ENCODE measurements at regions of chr6 and their contacts with region 1.

Region 1: GRCh38 chr6:34986845-34987246 is 97.8 kb downstream of the ANKS1A start:
- DNase-seq: peak; percentile 68
- H3K4me3 Mint-ChIP-seq: no peak overlapping the region
- H3K27ac Mint-ChIP-seq: no peak overlapping the region
- H3K4me1 Mint-ChIP-seq: no peaks in the 10 kb centered on the region
- H3K27me3 Mint-ChIP-seq: no peaks in the 10 kb centered on the region

Region 2: GRCh38 chr6:34773916-34774315 is 212.9 kb before region 1 on chr6:
- CTCF ChIA-PET with region 1: no interaction called
- POLR2A ChIA-PET with region 1: no interaction called
- intact Hi-C with region 1: no loop called
- DNase-seq: no peak
- H3K4me3 Mint-ChIP-seq: no peak overlapping the region
- H3K27ac Mint-ChIP-seq: no peak overlapping the region
- H3K4me1 Mint-ChIP-seq: peaks cover 14% of the 10 kb centered on the region
- H3K27me3 Mint-ChIP-seq: no peaks in the 10 kb centered on the region

Region 3: DNA sequence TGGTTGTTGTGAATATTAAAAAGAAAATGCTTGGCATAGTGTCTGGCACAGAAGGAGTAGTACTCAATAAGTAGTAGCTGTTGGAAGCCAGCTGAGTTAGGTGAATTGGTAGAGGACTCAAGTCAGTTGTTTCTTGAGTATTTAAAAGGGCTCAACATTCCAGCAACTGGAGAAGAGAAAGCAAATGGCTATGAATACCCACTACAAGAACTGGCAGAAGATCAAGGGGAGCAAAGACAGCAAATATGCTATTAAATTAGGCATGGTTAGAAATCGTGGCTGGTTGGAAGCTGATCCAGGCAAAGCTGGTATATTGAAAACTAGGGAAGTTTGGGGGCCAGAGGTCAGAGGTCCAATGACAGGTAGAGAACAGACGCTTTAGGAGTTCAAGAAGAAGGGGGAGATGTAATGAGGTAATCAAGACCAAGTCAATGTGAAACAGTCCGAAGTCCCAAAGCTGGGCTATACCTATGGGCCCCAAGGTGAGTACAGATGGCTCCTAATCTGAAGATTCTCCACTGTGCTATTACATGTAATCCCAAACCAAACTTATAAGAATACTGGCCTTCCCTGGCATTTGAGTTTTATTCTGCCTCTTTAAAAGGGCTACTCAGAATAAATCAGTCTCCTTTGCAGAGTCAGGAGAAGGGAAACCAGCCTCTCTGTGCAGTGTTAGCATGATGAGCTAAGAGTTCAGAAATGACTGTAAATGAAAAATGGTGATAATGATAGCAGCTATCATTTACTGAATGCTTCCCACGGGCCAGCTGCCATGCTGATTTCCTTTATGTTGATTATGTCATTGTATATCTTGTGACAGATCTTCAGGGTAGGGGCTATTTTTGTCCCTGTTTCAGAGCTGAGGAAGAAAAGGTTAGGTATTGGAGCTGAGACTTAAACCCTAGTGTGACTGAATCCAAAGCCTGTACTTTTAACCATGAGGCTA is 24.5 kb after region 1 on chr6:
- CTCF ChIA-PET with region 1: interaction called, 14 read pairs
- POLR2A ChIA-PET with region 1: no interaction called
- intact Hi-C with region 1: no loop called
- DNase-seq: peak; percentile 40
- H3K4me3 Mint-ChIP-seq: no peak overlapping the region
- H3K27ac Mint-ChIP-seq: no peak overlapping the region
- H3K4me1 Mint-ChIP-seq: peaks cover 10% of the 10 kb centered on the region
- H3K27me3 Mint-ChIP-seq: no peaks in the 10 kb centered on the region

Region 4: DNA sequence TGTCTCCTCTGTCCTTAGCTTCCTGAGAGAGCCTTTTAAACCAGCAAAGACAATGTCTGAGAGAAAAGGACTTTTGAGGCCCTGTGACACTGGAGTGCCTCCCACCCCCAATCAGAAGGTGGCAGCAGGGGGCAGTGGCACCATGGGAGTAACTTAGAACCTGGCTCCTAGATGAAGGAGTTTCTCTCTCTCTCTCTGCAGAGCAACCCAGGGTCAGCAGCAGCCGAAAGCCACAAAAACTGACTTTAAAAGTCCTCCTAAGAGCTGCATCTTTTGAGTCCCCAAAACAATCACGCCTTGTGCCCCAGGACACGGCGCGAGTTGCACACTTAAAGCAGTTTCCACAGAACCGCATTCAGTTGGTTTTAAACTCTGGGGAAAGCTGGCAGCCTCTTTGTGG is 159.6 kb after region 1 on chr6:
- CTCF ChIA-PET with region 1: interaction called, 10 read pairs
- POLR2A ChIA-PET with region 1: no interaction called
- intact Hi-C with region 1: no loop called
- DNase-seq: peak; percentile 65
- H3K4me3 Mint-ChIP-seq: no peak overlapping the region
- H3K27ac Mint-ChIP-seq: no peak overlapping the region
- H3K4me1 Mint-ChIP-seq: peaks cover 25% of the 10 kb centered on the region
- H3K27me3 Mint-ChIP-seq: peaks cover 5% of the 10 kb centered on the region

Region 5: DNA sequence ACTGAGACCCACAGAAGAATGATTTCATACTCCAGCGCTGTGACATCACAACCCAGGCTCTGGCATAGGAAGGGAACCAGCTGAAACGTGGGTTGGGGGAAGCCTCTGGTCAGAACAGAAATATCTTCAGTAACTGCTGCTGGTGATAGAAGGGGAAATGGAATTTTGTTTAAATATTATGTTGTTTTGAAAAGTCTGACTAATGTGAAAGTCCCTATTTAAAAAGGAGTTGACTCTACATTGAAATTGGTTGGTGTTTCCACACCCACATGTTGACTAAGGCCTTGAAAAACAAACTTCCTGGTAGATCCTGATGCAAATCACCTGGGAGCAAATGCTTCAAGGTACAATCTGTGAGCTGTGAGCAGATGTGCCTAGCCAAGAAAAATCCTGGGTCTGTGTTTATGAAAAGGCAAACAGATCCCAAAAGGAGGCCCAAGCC is 178.8 kb after region 1 on chr6:
- CTCF ChIA-PET with region 1: no interaction called
- POLR2A ChIA-PET with region 1: no interaction called
- intact Hi-C with region 1: no loop called
- DNase-seq: no peak
- H3K4me3 Mint-ChIP-seq: no peak overlapping the region
- H3K27ac Mint-ChIP-seq: no peak overlapping the region
- H3K4me1 Mint-ChIP-seq: peaks cover 7% of the 10 kb centered on the region
- H3K27me3 Mint-ChIP-seq: peaks cover 5% of the 10 kb centered on the region